Activated B cell treated with CpG ODN at 0.5 μM for 24 hours (primary cell): ENCODE measurements at regions of chr1 and their contacts with region 1.

Region 1: DNA sequence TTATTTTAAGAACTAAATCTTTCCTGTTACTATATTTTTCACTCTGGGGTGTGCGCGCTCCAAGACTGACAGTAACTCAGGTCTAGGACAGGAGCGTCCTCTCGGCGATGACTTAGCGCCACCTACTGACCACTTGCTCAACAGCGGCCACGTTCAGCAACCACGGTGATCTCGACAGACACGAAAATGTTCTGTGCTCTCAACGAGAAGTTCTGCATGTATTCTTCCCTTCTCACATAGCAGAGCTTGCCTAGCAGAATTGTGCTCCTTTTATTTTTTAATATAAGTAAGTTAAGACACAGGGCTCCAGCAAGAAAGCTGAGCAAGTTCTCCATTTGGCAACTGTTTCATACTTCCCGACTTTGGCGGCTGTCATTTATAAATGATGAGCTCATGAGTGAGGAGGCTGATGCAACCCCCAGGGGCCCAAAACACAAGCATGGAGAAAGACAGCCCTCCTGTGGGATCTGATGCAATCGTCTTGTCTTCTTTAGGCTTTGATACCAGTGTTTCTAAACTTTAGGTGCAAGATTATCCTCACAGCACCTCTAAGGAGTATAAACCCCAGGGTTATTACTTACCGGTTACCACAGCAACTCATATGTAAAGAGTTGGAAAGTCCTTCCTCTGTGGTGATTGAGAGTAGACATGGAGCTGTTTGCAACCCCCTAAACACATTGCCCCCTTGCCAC is 92.6 kb downstream of the HHIPL2 start:
- DNase-seq: peak; percentile 63
- ATAC-seq: peak; percentile 97
- H3K4me3 Mint-ChIP-seq: peak overlapping the region; percentile 1
- H3K27ac Mint-ChIP-seq: peak overlapping the region; percentile 20
- H3K4me1 Mint-ChIP-seq: peaks cover 12% of the 10 kb centered on the region
- H3K27me3 Mint-ChIP-seq: peaks cover 1% of the 10 kb centered on the region
- CTCF ChIP-seq: peak; percentile 85

Region 2: GRCh38 chr1:220894025-220894923 is 1561.1 kb before region 1 on chr1:
- CTCF ChIA-PET with region 1: no interaction called
- POLR2A ChIA-PET with region 1: no interaction called
- intact Hi-C with region 1: loop called (anchors 5 kb)
- DNase-seq: peak; percentile 28
- ATAC-seq: peak; percentile 52
- H3K4me3 Mint-ChIP-seq: peak overlapping the region; percentile 83
- H3K27ac Mint-ChIP-seq: no peak overlapping the region
- H3K4me1 Mint-ChIP-seq: peaks cover 36% of the 10 kb centered on the region
- H3K27me3 Mint-ChIP-seq: peaks cover 50% of the 10 kb centered on the region
- CTCF ChIP-seq: no peak

Region 3: DNA sequence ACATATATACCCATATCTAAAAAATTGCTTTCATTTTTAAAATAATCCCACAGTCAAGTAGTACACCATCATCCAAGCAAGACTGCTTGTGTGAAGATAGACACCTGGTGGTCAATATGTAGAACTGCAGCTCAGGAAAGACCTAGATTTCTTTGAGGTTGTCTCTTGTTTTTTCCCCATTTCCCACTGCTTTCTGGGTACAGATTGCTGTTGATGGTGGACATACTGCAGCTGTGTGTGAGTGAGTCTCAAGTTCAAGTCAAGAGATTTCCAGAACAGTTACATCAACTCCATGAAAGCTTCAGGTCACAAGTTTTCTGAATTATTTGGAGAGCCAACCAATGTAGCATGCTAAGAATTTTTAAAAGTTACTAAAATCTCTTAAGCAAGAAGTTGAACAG is 1019.8 kb before region 1 on chr1:
- CTCF ChIA-PET with region 1: interaction called, 7 read pairs
- POLR2A ChIA-PET with region 1: no interaction called
- intact Hi-C with region 1: loop called (anchors 1 kb)
- DNase-seq: no peak
- ATAC-seq: peak; percentile 27
- H3K4me3 Mint-ChIP-seq: no peak overlapping the region
- H3K27ac Mint-ChIP-seq: no peak overlapping the region
- H3K4me1 Mint-ChIP-seq: peaks cover 26% of the 10 kb centered on the region
- H3K27me3 Mint-ChIP-seq: peaks cover 4% of the 10 kb centered on the region
- CTCF ChIP-seq: peak; percentile 29

Region 4: GRCh38 chr1:222009105-222009730 is 446.1 kb before region 1 on chr1:
- CTCF ChIA-PET with region 1: interaction called, 14 read pairs
- POLR2A ChIA-PET with region 1: no interaction called
- intact Hi-C with region 1: loop called (anchors 2 kb)
- DNase-seq: no peak
- ATAC-seq: peak; percentile 77
- H3K4me3 Mint-ChIP-seq: no peak overlapping the region
- H3K27ac Mint-ChIP-seq: no peak overlapping the region
- H3K4me1 Mint-ChIP-seq: peaks cover 2% of the 10 kb centered on the region
- H3K27me3 Mint-ChIP-seq: no peaks in the 10 kb centered on the region
- CTCF ChIP-seq: no peak

Region 5: GRCh38 chr1:222465211-222466041 is 10.1 kb after region 1 on chr1:
- CTCF ChIA-PET with region 1: interaction called, 16 read pairs
- POLR2A ChIA-PET with region 1: interaction called, 6 read pairs
- intact Hi-C with region 1: no loop called
- DNase-seq: peak; percentile 89
- ATAC-seq: peak; percentile 93
- H3K4me3 Mint-ChIP-seq: peak overlapping the region; percentile 92
- H3K27ac Mint-ChIP-seq: peak overlapping the region; percentile 98
- H3K4me1 Mint-ChIP-seq: peaks cover 13% of the 10 kb centered on the region
- H3K27me3 Mint-ChIP-seq: peaks cover 6% of the 10 kb centered on the region
- CTCF ChIP-seq: peak; percentile 100